HEK293 (cell line): ENCODE measurements at regions of chr2 and their contacts with region 1.

Region 1: DNA sequence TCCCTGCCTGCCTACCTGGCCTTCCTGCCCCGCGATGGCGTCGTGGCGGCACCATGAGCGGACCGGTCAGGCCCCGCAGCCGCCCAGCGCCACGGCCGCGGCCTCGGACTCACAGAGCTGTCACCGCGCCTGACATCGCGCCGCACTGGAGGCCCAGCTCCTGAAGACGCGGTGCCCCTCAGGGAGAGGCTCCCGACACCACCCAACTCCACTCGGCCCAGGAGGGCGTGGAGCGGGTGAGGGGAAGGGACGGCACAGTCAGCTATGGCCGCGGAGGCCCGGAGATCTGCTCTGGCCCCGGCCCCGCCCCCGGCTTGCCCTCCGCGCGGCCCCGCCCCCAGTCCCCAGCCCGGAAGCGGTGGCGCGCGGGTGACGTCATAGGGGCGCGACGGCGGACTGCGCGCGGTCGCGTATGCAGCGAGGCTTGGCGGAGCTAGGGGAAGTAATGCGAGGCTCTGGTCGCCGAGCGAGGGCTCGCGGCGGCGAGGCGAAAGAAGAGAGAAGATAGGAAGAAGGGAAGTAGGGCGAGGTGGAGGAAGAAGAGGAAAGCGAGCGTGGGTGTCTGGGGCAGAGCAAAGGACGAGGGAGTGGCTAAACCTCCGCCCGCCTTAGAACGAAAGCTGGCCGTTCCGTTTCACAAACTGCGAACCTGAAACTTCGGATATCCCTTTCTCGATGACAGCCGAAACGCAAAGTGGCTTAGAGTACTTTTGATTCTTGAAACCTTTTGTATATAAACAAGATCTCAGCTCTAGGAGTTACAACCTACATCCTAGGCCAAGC is at the start of gene SLC35F5:
- H3K4me3 ChIP-seq: peak within 1 kb of the TSS; percentile 98
- H3K27ac ChIP-seq: peak within 1 kb of the TSS; percentile 85
- H3K4me1 ChIP-seq: peaks cover 3% of the 10 kb centered on the region
- CTCF ChIP-seq: peak; percentile 79; the same call in 1 of the 2 replicates

Region 2: GRCh38 chr2:113818382-113818951 is 61.9 kb after region 1 on chr2:
- CTCF ChIA-PET with region 1: no interaction called
- POLR2A ChIA-PET with region 1: interaction called, 21 read pairs
- H3K4me3 ChIP-seq: no peak overlapping the region
- H3K27ac ChIP-seq: no peak overlapping the region
- H3K4me1 ChIP-seq: peaks cover 3% of the 10 kb centered on the region; the same call in 1 of the 2 replicates
- CTCF ChIP-seq: no peak

Region 3: DNA sequence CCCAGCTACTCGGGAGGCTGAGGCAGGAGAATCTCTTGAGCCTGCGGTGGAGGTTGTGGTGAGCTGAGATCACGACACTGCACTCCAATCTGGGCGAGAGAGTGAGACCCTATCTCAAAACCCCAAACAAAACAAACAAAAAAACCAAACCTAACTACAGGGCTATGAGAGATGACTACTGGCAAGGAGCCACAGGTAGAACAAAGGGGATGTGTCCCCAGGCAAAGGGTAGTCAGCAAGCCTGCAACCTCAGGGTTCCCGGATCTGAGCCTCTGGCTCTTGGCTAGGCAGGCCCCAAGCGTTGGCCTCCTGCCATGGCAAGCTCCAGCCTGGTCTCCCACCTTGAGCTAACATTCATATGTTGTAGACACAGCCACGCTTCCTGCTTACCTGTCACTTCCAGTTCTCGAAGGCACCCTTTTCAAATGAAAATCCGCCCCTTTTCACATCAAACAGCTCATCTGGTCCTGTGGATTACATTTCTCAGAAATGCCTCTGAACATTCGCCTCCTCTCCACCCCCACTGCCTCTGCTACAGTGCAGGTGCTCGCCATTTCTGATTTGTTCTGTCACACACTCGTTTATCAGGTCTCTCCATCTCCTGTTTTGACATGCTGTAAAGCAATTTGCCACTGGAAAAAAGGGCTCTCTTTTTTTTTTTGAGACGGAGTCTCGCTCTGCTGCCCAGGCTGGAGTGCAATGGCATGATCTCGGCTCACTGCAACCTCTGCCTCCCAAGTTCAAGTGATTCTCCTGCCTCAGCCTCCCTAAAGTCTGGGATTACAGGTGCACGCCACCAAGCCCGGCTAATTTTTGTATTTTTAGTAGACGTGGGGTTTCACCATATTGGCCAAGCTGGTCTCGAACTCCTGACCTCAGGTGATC is 120.2 kb after region 1 on chr2:
- CTCF ChIA-PET with region 1: interaction called, 3 read pairs
- POLR2A ChIA-PET with region 1: interaction called, 16 read pairs
- H3K4me3 ChIP-seq: no peak overlapping the region
- H3K27ac ChIP-seq: peak overlapping the region; percentile 67
- H3K4me1 ChIP-seq: peaks cover 26% of the 10 kb centered on the region
- CTCF ChIP-seq: no peak

Region 4: DNA sequence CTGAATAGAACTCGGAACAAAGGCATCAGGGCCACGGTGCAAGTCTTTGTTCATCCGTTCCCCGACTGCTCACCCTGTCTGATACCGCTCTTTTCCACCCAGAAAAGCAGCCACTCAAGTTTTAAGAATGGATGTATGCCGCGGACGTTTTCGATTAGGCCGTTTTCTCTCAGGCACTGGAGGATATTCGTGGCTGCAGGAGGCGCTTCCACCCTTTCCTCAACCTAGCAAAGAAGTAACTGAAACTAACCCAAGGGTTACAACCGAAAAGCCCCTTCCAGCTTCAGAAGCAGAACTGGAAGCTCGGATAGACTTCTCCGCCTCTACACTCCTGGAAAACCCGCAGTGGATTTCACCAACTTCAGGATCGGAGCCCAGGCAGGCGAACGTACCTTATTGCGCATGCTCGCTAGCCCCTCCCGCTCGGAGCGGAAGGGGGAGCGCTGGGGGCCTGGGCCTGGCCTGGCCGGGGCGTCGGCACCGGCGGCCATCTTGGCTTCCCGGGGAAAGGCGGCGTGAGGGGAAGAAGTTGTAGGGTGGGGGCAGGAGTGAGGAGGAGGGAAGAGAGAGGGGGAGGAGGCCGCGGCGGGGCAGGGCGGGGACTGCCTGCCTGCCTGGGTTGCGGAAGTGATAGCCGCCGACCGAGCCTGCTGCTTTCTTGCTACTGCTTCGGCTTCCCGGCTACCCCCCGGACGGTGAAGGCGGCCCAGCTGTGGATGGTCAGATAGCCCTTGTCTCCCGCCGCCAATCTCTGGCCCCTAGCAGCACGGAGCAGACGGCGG is 133.1 kb after region 1 on chr2 and contains the start of gene ACTR3:
- CTCF ChIA-PET with region 1: no interaction called
- POLR2A ChIA-PET with region 1: interaction called, 19 read pairs
- H3K4me3 ChIP-seq: peak within 1 kb of the TSS; percentile 100
- H3K27ac ChIP-seq: peak within 1 kb of the TSS; percentile 97
- H3K4me1 ChIP-seq: peaks cover 16% of the 10 kb centered on the region
- CTCF ChIP-seq: no peak